HEK293T (cell line): ENCODE measurements at regions of chr19 and their contacts with region 1.

Region 1: DNA sequence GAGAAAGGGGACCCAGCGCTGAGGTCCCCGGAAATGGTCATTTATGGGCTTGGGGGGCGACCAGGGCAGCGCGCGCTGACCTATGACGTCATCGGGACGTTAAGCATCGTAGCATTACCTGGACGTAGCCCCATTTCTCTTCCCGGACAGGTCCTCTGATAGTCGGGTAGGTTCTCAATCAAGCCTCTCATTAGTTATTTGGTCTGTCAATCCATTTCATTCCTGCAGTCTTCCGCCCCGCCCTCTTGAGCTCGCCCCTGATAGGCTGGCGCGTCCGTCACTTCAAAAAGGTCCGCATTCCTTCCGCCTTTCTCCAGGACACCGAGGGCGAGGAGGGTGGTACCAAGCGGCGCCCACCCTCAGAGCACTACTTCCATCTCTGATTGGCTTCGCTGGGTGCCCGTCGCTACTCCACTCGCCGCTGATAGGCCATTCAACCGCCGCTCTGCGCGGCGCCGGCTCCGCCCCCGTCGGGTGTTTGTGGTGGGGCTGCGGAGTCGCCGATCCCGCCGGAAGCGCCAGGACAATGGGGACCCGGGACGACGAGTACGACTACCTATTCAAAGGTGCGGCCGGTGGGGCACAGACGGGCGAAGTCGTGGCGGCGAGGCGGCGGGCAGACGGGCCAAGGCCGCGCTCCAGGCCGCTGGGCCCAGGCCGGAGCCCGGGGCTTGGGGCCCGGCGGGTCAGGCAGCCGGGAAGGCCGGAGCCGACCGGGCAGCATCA is at the start of gene RAB11B:
- DNase-seq: peak; percentile 97

Region 2: GRCh38 chr19:8329996-8330395 is 60.1 kb before region 1 on chr19:
- CTCF ChIA-PET with region 1: no interaction called
- POLR2A ChIA-PET with region 1: no interaction called
- DNase-seq: no peak

Region 3: GRCh38 chr19:8355631-8356402 is 34.2 kb before region 1 on chr19:
- CTCF ChIA-PET with region 1: interaction called, 3 read pairs
- POLR2A ChIA-PET with region 1: interaction called, 19 read pairs
- DNase-seq: no peak